Calu3 (cell line): ENCODE measurements at regions of chr4 and their contacts with region 1.

Region 1: DNA sequence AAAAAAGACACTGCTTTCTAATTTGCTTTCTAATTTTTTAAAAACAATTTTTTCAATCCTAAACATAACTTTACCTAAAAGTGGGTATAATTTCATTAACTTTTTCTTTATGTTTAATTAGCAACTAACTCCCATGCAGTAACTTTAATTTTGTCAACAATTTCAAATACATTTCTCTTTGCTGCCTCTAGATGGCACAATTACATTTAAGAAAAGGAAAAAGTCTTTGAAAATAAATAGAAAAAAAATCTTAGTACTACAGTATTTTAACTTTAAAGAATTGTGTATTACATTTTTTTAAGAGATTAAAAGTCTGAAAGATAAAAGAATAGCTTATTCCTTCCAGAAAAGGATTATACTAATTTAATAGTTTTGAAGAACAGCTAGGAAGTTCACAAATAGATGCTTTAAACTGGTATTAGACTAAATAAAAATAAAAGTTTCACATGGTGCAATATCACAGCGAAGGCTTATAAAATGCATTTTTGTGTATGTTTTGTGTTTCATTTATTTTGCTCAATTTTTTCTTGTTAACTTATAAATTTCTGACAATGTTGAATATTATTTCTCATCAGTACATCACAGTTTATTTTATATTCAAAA is 105.1 kb downstream of the ADGRA3 start:
- DNase-seq: no peak
- H3K4me3 Mint-ChIP-seq: no peak overlapping the region
- H3K27ac Mint-ChIP-seq: no peak overlapping the region
- H3K4me1 Mint-ChIP-seq: no peaks in the 10 kb centered on the region
- H3K27me3 Mint-ChIP-seq: no peaks in the 10 kb centered on the region
- CTCF ChIP-seq: peak; percentile 25

Region 2: DNA sequence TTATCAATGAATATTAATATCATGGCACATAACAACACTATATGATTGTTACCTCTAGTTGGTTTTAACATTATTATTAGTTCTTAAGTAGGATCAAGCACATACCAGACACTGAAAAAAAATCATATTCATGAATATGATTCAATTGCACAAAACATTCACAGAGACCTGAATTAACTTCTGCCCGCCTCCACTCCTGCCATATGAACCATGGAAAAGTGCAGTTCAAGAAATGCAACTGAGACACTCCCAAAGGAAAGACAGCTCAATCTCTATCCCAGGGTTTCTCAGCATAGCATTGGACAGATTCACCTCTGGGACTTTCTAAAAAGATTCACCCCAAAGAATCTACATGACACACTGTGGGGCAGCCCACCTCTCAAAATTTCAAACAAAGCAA is 358.7 kb before region 1 on chr4:
- CTCF ChIA-PET with region 1: no interaction called
- intact Hi-C with region 1: no loop called
- DNase-seq: no peak
- H3K4me3 Mint-ChIP-seq: no peak overlapping the region
- H3K27ac Mint-ChIP-seq: no peak overlapping the region
- H3K4me1 Mint-ChIP-seq: no peaks in the 10 kb centered on the region
- H3K27me3 Mint-ChIP-seq: no peaks in the 10 kb centered on the region
- CTCF ChIP-seq: no peak

Region 3: DNA sequence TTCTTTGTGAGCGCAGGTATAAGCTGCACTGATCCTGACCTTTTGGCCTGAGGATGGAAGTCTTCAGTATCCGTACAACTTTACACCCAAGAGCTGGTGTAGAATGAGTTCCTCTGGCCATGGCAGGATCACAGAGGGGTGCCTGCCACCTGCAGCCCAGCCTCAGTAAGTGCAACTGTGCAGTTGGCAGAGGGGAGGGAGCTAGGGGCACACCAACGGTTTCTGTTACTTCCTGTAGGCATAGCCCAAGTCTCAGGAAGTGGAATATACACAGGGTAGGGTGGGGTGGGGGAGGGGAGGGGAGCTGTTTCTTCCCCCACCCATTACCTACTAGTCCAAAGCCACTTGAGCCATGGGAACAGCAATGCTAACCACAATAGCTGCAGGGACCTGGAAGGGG is 196.6 kb after region 1 on chr4:
- CTCF ChIA-PET with region 1: no interaction called
- intact Hi-C with region 1: loop called (anchors 1 kb)
- DNase-seq: peak; percentile 66
- H3K4me3 Mint-ChIP-seq: no peak overlapping the region
- H3K27ac Mint-ChIP-seq: no peak overlapping the region
- H3K4me1 Mint-ChIP-seq: peaks cover 14% of the 10 kb centered on the region
- H3K27me3 Mint-ChIP-seq: no peaks in the 10 kb centered on the region
- CTCF ChIP-seq: peak; percentile 58

Region 4: DNA sequence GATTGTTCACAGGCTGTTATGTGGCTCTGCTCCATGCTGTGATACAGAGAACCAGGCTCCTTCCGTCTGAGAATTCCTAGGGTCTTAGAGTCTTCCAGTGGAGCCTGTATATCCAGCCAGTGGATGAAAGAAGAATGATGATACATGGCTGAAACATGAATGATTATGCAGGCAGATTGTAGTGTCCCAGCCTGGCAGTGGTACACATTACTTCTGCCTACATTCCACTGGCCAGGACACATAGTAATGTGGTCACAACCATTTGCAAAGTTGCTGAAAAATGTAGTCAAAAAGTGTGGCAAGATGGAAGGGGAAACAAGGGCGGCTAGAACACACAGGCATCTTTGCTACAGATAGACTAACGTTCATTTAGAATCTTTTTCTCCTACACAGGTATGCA is 277.5 kb after region 1 on chr4:
- CTCF ChIA-PET with region 1: no interaction called
- intact Hi-C with region 1: loop called (anchors 2 kb)
- DNase-seq: no peak
- H3K4me3 Mint-ChIP-seq: no peak overlapping the region
- H3K27ac Mint-ChIP-seq: no peak overlapping the region
- H3K4me1 Mint-ChIP-seq: no peaks in the 10 kb centered on the region
- H3K27me3 Mint-ChIP-seq: no peaks in the 10 kb centered on the region
- CTCF ChIP-seq: no peak